Activated CD4-positive, alpha-beta memory T cell treated with anti-CD3 and anti-CD28 coated beads, Interleukin-2, amount 10 ng/mL, durations not matched to agents 7 days and 5 days (primary cell): ENCODE measurements at regions of chr2 and their contacts with region 1.

Region 1: DNA sequence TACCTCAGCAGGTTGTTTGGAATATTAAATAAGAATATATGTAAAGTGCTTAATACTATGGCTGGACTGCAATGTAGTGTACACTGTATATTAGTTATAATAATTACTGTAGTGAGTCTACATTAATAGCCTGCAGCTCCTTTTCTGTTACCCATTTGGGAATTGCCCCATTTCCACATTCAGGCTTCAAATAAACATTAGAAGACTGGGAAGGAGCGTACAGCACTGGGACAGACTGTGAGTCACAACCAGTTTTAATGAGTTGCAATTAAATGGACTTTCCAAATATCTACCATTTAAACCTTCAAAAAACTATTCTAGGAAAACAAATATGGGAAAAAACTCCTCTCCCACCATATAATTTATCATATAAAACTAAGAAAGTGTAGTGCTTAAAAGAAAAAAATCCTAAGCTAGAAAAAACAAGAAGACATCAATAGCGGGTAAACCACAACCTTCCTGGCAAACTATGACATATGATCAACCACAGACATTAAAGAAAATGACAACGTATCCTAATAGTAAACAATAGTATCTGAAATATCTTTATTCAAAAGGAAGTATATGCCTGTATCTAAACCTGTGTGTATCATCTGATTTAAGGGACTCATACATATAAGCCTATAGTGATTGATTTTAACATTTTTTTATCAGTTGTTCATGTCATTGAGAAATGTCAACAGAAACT is 86.1 kb downstream of the TRIP12 start:
- DNase-seq: no peak
- H3K4me3 Mint-ChIP-seq: no peak overlapping the region
- H3K27ac Mint-ChIP-seq: no peak overlapping the region
- H3K4me1 Mint-ChIP-seq: peaks cover 43% of the 10 kb centered on the region
- H3K27me3 Mint-ChIP-seq: no peaks in the 10 kb centered on the region

Region 2: DNA sequence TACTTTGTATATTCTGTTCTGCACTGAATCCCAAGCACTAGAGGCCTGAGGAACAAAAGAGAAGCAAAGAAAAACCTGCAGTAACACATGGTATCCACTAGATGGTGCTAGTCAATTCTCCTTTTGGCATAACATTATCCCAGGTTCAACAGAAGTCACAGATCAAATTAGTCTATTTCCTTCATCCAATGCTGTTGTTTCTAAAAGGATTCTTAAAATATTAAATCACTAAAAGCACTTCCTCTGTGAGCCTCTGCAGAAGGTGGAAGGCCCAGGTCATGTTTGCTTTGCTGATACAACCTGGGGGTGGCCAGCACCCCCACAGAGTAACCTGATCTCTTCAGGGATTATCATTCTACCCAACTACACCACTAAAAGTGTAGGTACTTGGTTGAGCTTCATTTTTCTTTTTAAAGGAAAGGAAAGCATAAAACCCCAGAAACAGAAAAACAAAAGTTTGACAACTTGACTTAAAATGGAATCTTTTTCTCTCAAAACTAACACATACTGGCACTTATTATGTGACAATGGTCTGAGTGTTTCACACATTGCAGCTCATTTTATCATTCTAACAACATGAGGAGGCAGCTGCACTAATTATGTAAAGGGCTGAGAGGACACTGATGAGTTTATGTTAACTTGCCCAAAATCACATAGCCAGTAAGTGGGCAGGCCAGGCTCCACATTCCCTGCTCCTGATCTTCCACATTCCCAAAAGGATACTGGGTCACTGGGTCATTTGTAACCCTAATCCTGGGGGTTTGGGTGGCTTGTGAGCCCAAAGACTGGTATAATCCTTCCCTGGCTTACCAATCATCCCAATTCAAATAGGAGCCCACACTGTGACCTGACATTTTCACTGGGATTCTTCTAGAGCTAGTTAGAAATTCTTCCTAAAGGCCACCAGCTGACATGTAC is 54.6 kb before region 1 on chr2:
- CTCF ChIA-PET with region 1: interaction called, 10 read pairs
- POLR2A ChIA-PET with region 1: no interaction called
- DNase-seq: no peak
- H3K4me3 Mint-ChIP-seq: no peak overlapping the region
- H3K27ac Mint-ChIP-seq: no peak overlapping the region
- H3K4me1 Mint-ChIP-seq: peaks cover 19% of the 10 kb centered on the region
- H3K27me3 Mint-ChIP-seq: no peaks in the 10 kb centered on the region

Region 3: DNA sequence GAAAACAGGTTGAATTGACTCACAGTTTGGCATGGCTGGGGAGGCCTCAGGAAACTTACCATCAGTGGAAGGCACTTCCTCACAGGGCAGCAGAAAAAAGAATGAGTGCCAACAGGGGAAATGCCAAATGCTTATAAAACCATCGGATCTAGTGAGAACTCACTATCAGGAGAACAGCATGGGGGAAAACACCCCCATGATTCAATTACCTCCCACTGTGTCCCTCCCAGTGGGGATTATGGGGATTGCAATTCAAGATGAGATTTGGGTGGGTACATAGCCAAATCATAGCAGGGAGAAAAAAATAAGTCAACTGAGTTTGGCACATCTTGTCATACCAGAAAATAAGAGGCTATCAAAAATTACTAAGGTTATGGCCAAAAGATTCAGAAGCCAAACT is 10.3 kb before region 1 on chr2:
- CTCF ChIA-PET with region 1: interaction called, 3 read pairs
- POLR2A ChIA-PET with region 1: interaction called, 10 read pairs
- DNase-seq: no peak
- H3K4me3 Mint-ChIP-seq: no peak overlapping the region
- H3K27ac Mint-ChIP-seq: no peak overlapping the region
- H3K4me1 Mint-ChIP-seq: peaks cover 23% of the 10 kb centered on the region
- H3K27me3 Mint-ChIP-seq: no peaks in the 10 kb centered on the region

Region 4: GRCh38 chr2:229921892-229922445 is 86.2 kb after region 1 on chr2 and contains the start of gene TRIP12:
- CTCF ChIA-PET with region 1: no interaction called
- POLR2A ChIA-PET with region 1: interaction called, 11 read pairs
- DNase-seq: peak; percentile 89
- H3K4me3 Mint-ChIP-seq: peak within 1 kb of the TSS; percentile 93
- H3K27ac Mint-ChIP-seq: peak within 1 kb of the TSS; percentile 98
- H3K4me1 Mint-ChIP-seq: peaks cover 51% of the 10 kb centered on the region
- H3K27me3 Mint-ChIP-seq: no peaks in the 10 kb centered on the region
- total RNA-seq, gene TRIP12: 224 to 229 TPM